Activated CD4-positive, alpha-beta memory T cell treated with anti-CD3 and anti-CD28 coated beads, Interleukin-2, amount 10 ng/mL, durations not matched to agents 7 days and 5 days (primary cell): ENCODE measurements at regions of chr2 and their contacts with region 1.

Region 1: DNA sequence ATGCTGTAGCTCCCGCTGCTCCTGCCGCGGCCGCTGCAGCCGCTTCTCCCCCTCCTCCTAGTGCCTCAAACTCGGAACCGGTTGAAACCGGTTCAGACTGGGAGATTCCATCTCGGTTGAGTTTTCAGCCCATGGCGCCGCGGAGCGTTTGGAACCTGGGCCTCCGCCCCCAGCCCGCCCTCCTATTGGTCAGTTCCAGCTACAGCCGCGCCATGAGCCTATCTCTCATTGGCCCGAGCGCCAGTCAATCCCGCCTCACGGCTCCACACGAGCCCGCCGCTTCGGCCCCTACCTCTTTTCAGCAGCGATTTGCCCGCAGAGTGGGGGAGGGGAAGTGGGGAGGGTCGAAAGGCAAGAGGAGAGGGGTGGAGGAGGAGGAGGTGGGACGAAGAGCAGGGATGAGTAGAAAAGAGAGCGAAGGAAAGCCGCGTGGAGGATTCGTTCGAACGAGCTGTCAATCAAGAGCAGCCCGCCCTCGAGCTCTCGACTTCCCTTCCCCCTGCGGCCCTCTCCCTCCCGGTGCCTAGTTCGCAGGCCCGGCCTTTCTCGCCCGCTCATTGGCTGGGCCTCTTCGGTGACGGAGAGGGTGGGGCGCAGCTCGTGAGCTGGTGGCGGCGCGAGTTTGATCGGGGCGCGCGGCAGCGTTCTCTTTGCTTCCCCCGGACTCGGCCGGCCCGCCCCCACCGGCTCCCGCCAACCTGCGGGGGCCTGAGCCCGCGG is at the start of gene XPO1:
- DNase-seq: peak; percentile 99
- H3K4me3 Mint-ChIP-seq: peak within 1 kb of the TSS; percentile 97
- H3K27ac Mint-ChIP-seq: peak within 1 kb of the TSS; percentile 100
- H3K4me1 Mint-ChIP-seq: peaks cover 37% of the 10 kb centered on the region
- H3K27me3 Mint-ChIP-seq: no peaks in the 10 kb centered on the region
- total RNA-seq, gene XPO1: 166 to 172 TPM

Region 2: GRCh38 chr2:60976875-60977561 is 561.3 kb before region 1 on chr2:
- CTCF ChIA-PET with region 1: no interaction called
- POLR2A ChIA-PET with region 1: no interaction called
- DNase-seq: no peak
- H3K4me3 Mint-ChIP-seq: no peak overlapping the region
- H3K27ac Mint-ChIP-seq: no peak overlapping the region
- H3K4me1 Mint-ChIP-seq: peaks cover 25% of the 10 kb centered on the region
- H3K27me3 Mint-ChIP-seq: no peaks in the 10 kb centered on the region

Region 3: DNA sequence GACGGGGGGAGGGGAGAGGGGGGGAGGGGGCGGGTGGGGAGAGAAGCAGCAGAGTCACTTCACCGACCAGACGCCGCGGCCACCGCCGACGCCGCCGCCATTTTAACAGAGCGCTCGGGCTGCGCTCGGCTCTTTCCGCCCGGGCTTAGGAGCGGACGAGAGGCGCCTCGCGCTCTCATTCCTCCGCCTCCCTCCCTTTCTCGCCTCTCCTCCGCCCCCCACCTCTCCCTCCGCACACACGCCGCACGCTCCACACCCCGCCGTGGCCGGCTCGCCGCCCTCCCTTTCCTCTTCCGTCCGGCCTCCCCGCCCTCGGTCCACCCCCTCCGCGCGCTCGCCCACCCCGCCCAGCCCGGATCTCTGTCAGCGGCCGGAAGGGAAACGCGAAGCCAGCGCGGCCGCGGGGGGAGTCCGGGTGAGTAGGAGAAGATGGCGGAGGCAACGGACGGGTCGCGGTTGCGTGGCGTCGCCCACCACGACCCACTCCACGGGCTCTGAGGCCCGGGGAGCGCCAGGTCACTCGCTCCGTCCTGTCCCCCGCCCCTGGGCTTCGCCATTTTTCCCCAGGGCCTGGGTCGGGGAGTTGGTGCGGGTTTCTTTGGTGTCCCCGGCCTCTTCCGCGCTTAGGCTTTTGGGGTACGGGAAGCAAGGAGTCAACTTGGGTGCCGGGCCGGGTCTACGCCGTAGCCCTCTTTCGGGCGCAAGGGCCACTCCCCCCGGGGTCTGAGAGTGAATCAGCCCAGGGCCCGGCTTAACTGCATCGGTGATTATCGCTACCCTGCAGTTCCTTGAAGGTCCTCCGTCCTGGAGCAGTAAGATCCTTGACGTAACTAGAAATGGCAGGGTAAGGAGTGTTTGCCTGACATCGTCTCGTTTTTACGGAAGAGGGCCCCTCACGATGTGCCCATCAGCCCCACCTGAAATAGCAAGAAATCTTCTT is 67.1 kb before region 1 on chr2 and contains the start of gene USP34:
- CTCF ChIA-PET with region 1: no interaction called
- POLR2A ChIA-PET with region 1: interaction called, 22 read pairs
- DNase-seq: peak; percentile 94
- H3K4me3 Mint-ChIP-seq: peak within 1 kb of the TSS; percentile 91
- H3K27ac Mint-ChIP-seq: peak within 1 kb of the TSS; percentile 95
- H3K4me1 Mint-ChIP-seq: peaks cover 30% of the 10 kb centered on the region
- H3K27me3 Mint-ChIP-seq: no peaks in the 10 kb centered on the region
- total RNA-seq, gene USP34: 77.5 to 79.4 TPM

Region 4: DNA sequence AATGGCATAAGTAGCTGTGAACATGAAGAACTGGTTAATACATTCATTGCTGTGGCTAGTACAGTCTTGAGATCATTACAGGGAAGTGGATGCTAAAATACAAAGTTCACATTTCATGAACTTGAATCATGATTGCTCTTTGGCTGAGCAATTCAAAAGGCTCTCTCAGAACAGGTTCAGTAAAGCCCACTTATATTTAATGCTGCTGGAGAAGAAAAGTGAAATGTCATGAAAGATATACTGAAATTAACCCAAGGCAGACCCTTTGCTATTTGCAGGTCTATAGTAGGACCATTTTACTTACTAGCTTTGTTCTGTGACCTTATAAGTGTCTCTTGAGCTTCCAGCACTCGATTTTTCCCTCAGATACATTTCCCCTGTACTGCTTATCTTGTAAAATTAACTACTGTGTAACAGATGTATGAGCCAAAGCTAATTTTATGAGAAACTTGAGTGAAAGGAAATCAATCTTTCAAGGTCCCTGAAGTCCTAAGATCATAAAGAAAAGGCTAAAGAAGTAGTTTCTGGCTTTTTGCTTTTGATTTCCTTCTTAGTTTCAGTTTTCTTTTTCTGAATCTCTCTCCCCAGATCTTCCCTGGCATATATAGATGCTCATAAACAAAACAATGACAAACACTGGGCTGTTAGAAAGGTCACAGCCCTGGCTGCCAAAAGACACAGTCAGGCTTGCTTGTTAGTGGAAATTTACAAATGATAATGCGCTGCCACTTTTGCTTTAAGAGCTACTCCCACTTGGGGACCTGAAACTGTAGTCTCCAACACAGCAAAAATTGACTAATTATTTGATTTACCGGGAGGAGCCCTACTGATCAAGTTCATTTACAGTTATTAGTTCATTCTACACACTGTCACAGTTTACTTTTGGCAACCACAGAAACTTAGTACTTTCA is 132.5 kb after region 1 on chr2:
- CTCF ChIA-PET with region 1: interaction called, 5 read pairs
- POLR2A ChIA-PET with region 1: interaction called, 19 read pairs
- DNase-seq: peak; percentile 33
- H3K4me3 Mint-ChIP-seq: peak overlapping the region; percentile 63
- H3K27ac Mint-ChIP-seq: peak overlapping the region; percentile 72
- H3K4me1 Mint-ChIP-seq: peaks cover 17% of the 10 kb centered on the region
- H3K27me3 Mint-ChIP-seq: no peaks in the 10 kb centered on the region

Region 5: GRCh38 chr2:61764035-61764800 is 225.9 kb after region 1 on chr2:
- CTCF ChIA-PET with region 1: no interaction called
- POLR2A ChIA-PET with region 1: interaction called, 22 read pairs
- DNase-seq: peak; percentile 98
- H3K4me3 Mint-ChIP-seq: peak overlapping the region; percentile 91
- H3K27ac Mint-ChIP-seq: peak overlapping the region; percentile 94
- H3K4me1 Mint-ChIP-seq: peaks cover 30% of the 10 kb centered on the region
- H3K27me3 Mint-ChIP-seq: no peaks in the 10 kb centered on the region

Region 6: DNA sequence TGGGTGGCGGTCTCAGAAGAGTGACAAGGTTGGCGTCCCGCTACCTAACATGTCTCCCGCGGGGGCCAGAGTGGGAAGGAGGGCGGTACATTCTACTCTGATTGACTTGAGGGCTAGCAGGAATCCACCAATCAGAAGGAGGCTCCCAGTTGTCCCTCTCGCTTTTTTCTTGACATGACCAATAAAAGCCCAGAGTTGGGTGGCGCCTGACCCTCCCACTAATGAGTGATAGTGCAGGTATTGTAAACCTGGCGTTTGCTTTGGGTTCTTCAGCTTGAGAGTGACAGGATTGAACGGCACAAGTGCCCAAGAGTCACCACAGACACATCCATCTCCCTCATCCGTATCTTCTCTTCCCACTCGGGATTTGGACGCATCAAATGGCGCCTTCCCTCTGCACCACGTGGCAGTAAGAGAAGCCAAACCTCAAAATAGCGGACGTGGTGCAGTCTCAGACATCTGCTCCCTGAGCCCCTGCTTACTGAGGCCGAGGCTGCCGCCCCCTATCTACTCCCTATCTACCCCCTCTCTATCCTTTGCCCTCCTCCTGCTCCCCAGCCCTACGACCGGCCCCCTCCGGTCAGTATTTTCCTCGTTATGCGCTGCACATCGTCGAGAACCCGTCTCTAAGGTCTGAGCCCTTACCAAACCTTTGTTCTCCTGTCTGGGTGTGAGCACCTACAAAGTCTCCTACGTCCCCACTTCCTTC is 316.3 kb after region 1 on chr2:
- CTCF ChIA-PET with region 1: no interaction called
- POLR2A ChIA-PET with region 1: interaction called, 15 read pairs
- DNase-seq: peak; percentile 92
- H3K4me3 Mint-ChIP-seq: peak overlapping the region; percentile 86
- H3K27ac Mint-ChIP-seq: peak overlapping the region; percentile 77
- H3K4me1 Mint-ChIP-seq: peaks cover 25% of the 10 kb centered on the region
- H3K27me3 Mint-ChIP-seq: no peaks in the 10 kb centered on the region